HEK293T (cell line): ENCODE measurements at regions of chr13 and their contacts with region 1.

Region 1: GRCh38 chr13:72205773-72206172 is 338.8 kb upstream of the DACH1 start:
- DNase-seq: no peak

Region 2: GRCh38 chr13:72221276-72221962 is 15.6 kb after region 1 on chr13:
- CTCF ChIA-PET with region 1: interaction called, 10 read pairs
- POLR2A ChIA-PET with region 1: no interaction called
- DNase-seq: peak; percentile 94